PC-3 (cell line): ENCODE measurements at regions of chr6 and their contacts with region 1.

Region 1: GRCh38 chr6:134436281-134436815 is 118.4 kb upstream of the SGK1 start:
- DNase-seq: peak; percentile 90
- ATAC-seq: peak; percentile 97
- H3K4me3 ChIP-seq: peak overlapping the region; percentile 47
- H3K27ac ChIP-seq: peak overlapping the region; percentile 93
- H3K4me1 ChIP-seq: peaks cover 28% of the 10 kb centered on the region
- H3K27me3 ChIP-seq: no peaks in the 10 kb centered on the region
- CTCF ChIP-seq: no peak

Region 2: DNA sequence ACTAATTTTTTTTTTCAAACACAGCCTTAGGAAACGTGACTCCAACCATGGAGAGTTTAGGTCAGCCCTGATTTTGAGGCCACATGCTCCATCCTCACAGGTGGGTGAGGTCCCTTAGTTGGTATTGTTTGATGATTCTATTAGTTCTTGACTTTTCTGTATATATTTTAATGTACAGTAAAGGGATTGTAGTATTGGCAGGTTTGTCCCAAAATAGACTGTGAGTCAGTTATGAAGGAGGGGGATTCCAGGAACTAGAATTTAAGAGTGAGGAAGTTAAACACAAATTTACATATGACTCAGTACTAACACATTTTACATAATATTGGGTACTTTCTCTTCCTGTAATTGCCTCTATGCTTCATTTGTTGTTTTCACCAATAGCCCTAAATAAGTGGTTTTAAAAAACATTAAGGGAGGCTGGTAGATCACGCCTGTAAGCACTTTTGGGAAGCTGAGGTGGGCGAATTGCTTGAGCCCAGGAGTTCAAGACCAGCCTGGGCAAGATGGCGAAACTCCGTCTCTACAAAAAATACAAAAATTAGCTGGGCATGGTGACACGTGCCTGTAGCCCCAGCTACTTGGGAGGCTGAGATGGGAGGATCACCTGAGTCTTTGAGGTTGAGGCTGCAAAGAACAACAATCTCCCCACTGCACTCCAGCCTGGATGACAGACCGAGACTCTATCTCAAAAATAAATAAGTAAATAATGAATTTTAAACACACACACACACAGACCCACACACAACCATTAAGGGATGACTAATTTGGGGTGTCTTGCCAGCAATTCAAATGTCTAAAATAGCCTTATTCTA is 200.2 kb before region 1 on chr6:
- CTCF ChIA-PET with region 1: no interaction called
- POLR2A ChIA-PET with region 1: no interaction called
- intact Hi-C with region 1: loop called (anchors 2 kb)
- DNase-seq: peak; percentile 56
- ATAC-seq: peak; percentile 96
- H3K4me3 ChIP-seq: no peak overlapping the region
- H3K27ac ChIP-seq: peak overlapping the region; percentile 76
- H3K4me1 ChIP-seq: peaks cover 13% of the 10 kb centered on the region
- H3K27me3 ChIP-seq: no peaks in the 10 kb centered on the region
- CTCF ChIP-seq: no peak

Region 3: DNA sequence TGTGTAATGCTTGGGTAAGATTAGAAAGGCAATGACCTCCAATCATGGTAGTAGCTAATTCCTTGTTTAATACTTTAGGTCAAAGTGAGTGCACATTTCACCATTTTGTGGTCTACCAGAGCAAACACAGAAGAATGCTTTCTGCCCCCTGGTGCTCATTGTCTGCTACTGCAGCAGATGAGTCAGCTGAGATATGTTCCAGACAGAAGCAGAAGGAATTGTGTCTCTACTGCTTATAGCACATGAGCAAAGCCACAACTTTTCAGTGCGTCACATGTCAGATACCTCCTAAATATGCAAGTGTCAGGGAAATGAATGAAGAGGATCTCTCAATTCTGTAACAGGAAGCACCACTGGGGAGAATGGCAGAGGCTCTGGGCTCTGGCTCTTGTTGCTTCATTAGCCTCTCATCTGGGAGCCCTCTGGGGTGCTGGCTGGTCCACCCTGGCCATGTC is 204.7 kb after region 1 on chr6:
- CTCF ChIA-PET with region 1: no interaction called
- POLR2A ChIA-PET with region 1: interaction called, 3 read pairs
- intact Hi-C with region 1: loop called (anchors 10 kb)
- DNase-seq: peak; percentile 86
- ATAC-seq: peak; percentile 70
- H3K4me3 ChIP-seq: no peak overlapping the region
- H3K27ac ChIP-seq: no peak overlapping the region
- H3K4me1 ChIP-seq: peaks cover 22% of the 10 kb centered on the region
- H3K27me3 ChIP-seq: no peaks in the 10 kb centered on the region
- CTCF ChIP-seq: peak; percentile 86